ENCODE measurements at regions of chr1 and their contacts with region 1.

Region 1: DNA sequence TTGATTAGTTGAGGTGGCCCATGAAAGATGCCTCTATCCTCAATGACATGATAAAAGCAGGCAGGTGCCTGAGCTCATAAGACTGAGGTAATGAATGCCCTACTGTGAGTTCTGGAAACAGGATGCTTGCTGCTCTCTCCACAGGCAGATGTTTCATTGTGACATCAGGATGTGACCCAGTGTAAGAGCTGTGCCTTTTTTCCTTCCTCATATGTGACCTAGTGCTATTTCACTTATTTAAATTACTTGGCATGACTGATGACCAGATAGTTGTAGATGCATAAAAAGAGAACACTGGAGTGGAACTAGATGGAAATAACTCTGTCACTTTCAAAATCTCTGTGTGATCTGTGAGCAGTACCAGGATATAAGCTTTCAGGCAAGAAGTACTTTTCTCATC is 31.9 kb downstream of the KIF14 start:
- DNase-seq: no peak
- H3K4me3 Mint-ChIP-seq: no peak overlapping the region
- H3K27ac Mint-ChIP-seq: no peak overlapping the region
- H3K4me1 Mint-ChIP-seq: no peaks in the 10 kb centered on the region
- H3K27me3 Mint-ChIP-seq: no peaks in the 10 kb centered on the region

Region 2: DNA sequence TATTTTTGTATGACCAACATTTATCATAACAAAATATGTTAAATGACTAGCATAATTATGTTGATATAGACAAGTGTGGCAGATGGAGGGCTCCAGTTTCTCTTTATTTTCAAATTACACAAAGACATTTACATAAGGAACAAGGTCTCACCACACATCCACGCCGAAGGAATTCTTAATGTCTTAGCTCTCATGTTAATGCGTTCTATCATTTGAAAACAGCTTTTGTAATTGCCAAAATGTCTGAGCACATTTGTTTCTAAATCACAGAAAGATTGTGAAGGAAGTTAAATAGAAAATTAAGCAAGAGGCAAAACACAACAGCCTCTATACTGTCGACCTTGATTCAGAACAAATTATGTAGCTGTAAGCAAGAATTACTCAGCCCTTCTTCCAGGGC is 784.2 kb before region 1 on chr1:
- CTCF ChIA-PET with region 1: interaction called, 17 read pairs
- POLR2A ChIA-PET with region 1: no interaction called
- DNase-seq: no peak
- H3K4me3 Mint-ChIP-seq: no peak overlapping the region
- H3K27ac Mint-ChIP-seq: no peak overlapping the region
- H3K4me1 Mint-ChIP-seq: no peaks in the 10 kb centered on the region
- H3K27me3 Mint-ChIP-seq: no peaks in the 10 kb centered on the region

Region 3: DNA sequence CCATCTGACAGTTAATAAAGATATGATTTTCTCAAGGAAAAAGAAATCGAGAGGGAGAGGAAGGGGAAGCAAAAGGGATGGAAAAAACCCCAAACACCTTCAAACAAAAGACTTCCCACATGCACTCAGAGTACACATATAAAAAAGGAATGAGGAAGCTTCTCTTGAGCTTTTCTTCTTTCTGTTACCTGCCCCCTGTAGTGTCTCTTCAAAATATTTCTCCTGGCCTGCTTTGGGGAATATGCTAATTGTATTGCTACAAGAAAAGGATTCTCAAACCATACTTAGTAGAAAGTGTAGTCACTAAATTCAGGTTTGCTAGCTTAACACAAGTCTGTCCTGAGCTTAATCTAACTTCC is 26.9 kb before region 1 on chr1:
- CTCF ChIA-PET with region 1: no interaction called
- POLR2A ChIA-PET with region 1: no interaction called
- DNase-seq: no peak
- H3K4me3 Mint-ChIP-seq: no peak overlapping the region
- H3K27ac Mint-ChIP-seq: no peak overlapping the region
- H3K4me1 Mint-ChIP-seq: peaks cover 11% of the 10 kb centered on the region
- H3K27me3 Mint-ChIP-seq: no peaks in the 10 kb centered on the region

Region 4: GRCh38 chr1:200780545-200781369 is 192.1 kb after region 1 on chr1:
- CTCF ChIA-PET with region 1: no interaction called
- POLR2A ChIA-PET with region 1: no interaction called
- DNase-seq: no peak
- H3K4me3 Mint-ChIP-seq: no peak overlapping the region
- H3K27ac Mint-ChIP-seq: no peak overlapping the region
- H3K4me1 Mint-ChIP-seq: peaks cover 1% of the 10 kb centered on the region
- H3K27me3 Mint-ChIP-seq: peaks cover 4% of the 10 kb centered on the region

Region 5: DNA sequence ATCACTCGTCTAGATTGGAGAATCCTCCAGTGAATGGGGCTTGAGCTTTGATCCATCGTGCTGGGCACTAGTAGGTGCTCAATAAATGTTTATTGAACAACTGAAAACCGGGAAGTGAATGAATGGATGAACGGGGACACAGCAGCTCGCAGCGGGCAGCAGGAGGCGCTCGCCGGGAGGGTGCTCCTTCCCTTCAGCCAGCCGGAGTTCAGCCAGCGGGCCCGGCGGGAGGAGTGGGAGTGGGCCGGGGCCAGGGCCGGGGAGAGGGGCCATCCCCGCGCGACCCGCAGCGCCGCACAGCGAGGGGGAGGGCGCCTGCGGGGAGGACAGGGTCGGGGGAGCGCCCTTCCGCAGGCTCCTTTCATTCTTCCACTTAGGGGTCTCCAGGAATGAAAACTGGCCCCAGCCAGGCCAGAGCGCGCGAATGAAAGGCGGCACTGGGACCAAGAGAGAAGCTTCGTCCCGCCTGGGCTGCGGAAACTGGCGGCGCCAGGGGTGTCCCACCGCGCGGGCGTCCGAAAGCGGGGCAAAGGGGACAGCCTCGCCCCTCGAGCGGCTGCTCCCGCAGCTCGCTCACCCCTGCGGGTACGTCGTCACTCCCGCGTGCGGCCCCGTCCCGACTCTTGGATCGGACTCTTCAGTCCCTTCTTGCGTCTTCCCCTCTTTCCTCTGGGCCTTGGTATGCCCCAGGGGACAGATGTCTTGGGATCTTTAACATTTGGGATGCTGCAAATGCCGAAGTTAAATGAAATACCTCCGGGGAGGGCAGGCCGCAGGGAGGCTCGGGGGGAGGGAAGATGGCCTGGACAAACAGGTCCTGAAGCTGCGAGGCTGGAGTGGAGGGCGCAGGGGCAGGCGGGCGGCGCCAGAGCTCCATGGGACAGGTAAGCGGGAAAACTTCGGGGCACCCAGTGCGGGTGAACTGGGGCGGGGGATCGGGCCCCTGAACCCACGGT is 302.4 kb after region 1 on chr1:
- CTCF ChIA-PET with region 1: no interaction called
- POLR2A ChIA-PET with region 1: no interaction called
- DNase-seq: no peak
- H3K4me3 Mint-ChIP-seq: peak overlapping the region; percentile 27
- H3K27ac Mint-ChIP-seq: no peak overlapping the region
- H3K4me1 Mint-ChIP-seq: peaks cover 44% of the 10 kb centered on the region
- H3K27me3 Mint-ChIP-seq: peaks cover 59% of the 10 kb centered on the region